Sigmoid colon (tissue), 7 donors: ENCODE measurements at regions of chr3 and their contacts with region 1.

Region 1: DNA sequence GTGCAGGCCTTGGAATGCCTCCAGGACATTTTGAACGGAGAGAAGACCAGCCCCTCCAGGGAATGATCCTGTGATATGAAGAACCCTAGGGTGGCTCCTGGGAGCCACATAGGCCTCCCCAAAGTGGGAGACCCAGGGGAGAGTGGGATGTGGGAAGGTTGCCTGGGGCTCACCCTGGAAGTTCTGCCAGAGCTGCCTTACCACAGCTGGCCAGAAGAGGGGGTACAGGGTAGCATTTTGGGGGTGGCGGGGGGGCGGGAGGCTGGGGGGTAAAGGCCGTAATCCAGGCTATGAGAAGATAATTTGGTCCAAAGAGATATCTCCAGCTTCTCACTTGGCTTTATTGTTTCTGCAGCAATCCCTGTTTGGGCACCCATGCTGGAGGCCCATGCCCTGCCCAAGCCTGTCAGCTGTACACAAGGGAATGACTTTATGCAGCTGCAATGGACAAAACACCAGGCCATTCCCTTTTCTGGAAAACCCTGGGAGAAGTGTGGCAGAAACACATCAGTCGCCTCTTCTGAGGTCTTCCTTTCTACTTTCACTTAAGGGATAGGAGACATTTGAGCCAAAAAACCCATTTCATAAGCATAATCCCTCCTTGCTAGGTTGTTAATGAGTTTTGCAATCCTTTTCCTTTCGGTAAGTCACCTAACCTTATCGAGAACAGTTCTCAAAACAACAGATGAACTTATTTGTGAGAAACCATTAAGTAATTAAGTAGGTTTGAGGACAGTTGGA is 11.0 kb upstream of the MUSTN1 start:
- DNase-seq: no peak
- H3K4me3 ChIP-seq: no peak overlapping the region
- H3K27ac ChIP-seq: peak overlapping the region; percentile 67 to 79 (median 74)
- H3K4me1 ChIP-seq: peaks cover 0 to 50% (median 30%) of the 10 kb centered on the region in 4 donors
- H3K27me3 ChIP-seq: no peaks in the 10 kb centered on the region
- CTCF ChIP-seq: peak in 2 of 4 experiments; percentile 26 to 50
- EP300 ChIP-seq: no peak
- POLR2A ChIP-seq: no peak

Region 2: DNA sequence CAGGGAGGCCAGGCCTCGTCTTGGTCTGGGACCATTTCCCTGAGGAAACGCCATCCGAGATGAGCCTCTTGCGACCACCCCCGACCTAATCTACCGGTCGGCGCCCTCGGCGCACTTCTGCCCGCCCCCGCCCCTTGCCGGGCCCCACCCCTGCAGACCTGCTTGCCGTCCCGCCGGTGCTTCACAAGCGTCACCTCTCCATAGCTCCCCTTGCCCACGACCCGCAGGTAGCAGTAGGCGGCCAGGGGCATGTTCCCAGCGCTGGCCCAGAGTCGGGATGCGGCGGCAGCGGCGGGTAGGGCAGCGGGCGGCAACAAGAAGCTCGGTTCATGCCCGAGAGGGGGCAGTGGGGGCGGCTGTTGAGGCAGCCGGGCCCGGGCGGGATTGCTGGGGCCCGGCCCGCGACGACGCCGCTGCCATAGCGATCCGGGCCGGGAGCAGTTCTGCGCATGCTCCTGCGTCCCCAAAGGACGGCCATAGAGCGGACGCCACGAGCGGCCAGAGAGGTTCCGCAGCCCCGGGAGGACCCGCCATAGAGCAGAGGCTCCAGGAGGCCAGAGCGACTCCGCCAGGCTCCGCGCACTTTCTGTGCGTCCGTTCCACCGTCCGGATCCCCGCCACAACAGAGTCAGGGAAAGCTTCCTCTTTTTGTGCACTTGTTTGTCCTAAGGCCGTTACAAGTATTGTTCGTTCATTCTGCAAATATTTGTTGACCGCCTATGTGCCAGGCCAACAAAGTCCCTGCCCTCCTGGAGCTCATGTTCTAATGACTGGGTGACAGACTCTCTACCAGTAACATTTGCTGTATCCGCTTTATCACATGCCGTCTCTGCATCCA is 75.1 kb before region 1 on chr3 and contains the start of gene NEK4:
- intact Hi-C with region 1: loop called (anchors 5 kb)
- DNase-seq: peak; percentile 95
- H3K4me3 ChIP-seq: peak within 1 kb of the TSS; percentile 75 to 94 (median 83)
- H3K27ac ChIP-seq: peak within 1 kb of the TSS; percentile 69 to 80 (median 78)
- H3K4me1 ChIP-seq: peaks cover 0 to 20% (median 15%) of the 10 kb centered on the region in 4 donors
- H3K27me3 ChIP-seq: no peaks in the 10 kb centered on the region
- CTCF ChIP-seq: no peak
- EP300 ChIP-seq: no peak
- POLR2A ChIP-seq: peak; percentile 44 to 52
- total RNA-seq, gene NEK4: 17.1 to 19.4 (median 19.0) TPM

Region 3: GRCh38 chr3:52897130-52898122 is 51.6 kb after region 1 on chr3 and contains the start of gene STIMATE:
- intact Hi-C with region 1: loop called (anchors 5 kb)
- DNase-seq: peak; percentile 92
- H3K4me3 ChIP-seq: peak within 1 kb of the TSS; percentile 67 to 91 (median 78)
- H3K27ac ChIP-seq: peak within 1 kb of the TSS; percentile 70 to 83 (median 77)
- H3K4me1 ChIP-seq: peaks cover 0 to 47% (median 35%) of the 10 kb centered on the region in 4 donors
- H3K27me3 ChIP-seq: no peaks in the 10 kb centered on the region
- CTCF ChIP-seq: no peak
- EP300 ChIP-seq: no peak
- POLR2A ChIP-seq: no peak
- total RNA-seq, gene STIMATE: 11.5 to 19.5 (median 14.7) TPM

Region 4: GRCh38 chr3:52934630-52935530 is 89.0 kb after region 1 on chr3:
- intact Hi-C with region 1: loop called (anchors 10 kb)
- DNase-seq: no peak
- H3K4me3 ChIP-seq: no peak overlapping the region
- H3K27ac ChIP-seq: no peak overlapping the region
- H3K4me1 ChIP-seq: peaks cover 0 to 10% (median 0%) of the 10 kb centered on the region in 4 donors
- H3K27me3 ChIP-seq: no peaks in the 10 kb centered on the region
- CTCF ChIP-seq: peak; percentile 39 to 69 (median 52)
- EP300 ChIP-seq: no peak
- POLR2A ChIP-seq: no peak

Region 5: DNA sequence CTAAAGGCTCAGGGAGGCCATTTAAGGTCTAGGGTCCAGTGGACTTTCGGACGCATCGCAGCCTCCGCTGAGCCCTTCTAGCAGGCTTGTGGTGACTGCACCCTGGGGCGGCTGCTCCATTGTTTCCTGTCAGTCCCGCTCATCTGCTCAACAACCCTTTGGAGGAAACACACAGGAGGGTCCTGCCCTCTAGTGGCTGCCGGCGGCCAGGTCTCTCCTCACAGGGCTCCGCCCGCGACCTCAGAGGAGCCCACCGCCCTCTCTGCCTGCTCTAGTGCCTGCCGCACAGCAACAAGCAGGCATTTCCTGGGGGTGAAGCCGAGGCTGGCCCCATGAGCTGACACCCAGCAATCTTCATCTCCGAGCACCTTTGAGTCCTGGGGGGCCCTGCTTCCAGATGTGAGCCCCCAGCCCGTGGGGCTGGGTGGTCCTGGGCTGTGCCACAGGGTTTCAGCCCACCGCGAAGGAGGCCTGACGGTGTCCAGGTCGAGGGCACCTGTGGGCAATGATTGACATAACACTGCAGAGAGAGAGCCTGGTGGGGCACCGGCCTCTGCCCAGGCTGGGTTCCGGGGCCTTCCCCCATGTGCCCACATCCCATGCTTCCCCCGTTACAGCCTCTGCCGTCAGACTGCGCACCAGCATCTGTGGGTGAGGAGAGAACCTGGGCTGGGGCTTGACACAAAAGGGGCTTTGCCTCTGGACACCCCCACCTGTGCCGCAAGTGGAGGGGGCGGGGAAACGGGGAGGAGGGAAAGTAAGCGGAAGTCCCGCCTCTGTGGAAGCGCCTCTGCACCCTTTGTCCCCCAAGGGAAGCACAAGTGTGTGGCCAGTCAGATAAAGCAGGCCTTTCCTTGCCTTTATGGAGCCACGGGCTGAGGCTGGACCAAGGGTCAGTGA is 227.0 kb after region 1 on chr3:
- intact Hi-C with region 1: loop called (anchors 5 kb)
- DNase-seq: peak; percentile 87
- H3K4me3 ChIP-seq: peak overlapping the region; percentile 51 to 67 (median 64)
- H3K27ac ChIP-seq: peak overlapping the region; percentile 61 to 75 (median 69)
- H3K4me1 ChIP-seq: peaks cover 4 to 14% (median 12%) of the 10 kb centered on the region in 4 donors
- H3K27me3 ChIP-seq: no peaks in the 10 kb centered on the region
- CTCF ChIP-seq: peak; percentile 82 to 97 (median 92)
- EP300 ChIP-seq: no peak
- POLR2A ChIP-seq: no peak